Activated CD4-positive, alpha-beta memory T cell treated with anti-CD3 and anti-CD28 coated beads for 36 hours (primary cell): ENCODE measurements at regions of chr1 and their contacts with region 1.

Region 1: GRCh38 chr1:206890690-206891089 is 6.6 kb upstream of the IL24 start:
- DNase-seq: no peak
- H3K4me3 Mint-ChIP-seq: no peak overlapping the region
- H3K27ac Mint-ChIP-seq: peak overlapping the region; percentile 69
- H3K4me1 Mint-ChIP-seq: peaks cover 53% of the 10 kb centered on the region
- H3K27me3 Mint-ChIP-seq: peaks cover 3% of the 10 kb centered on the region

Region 2: DNA sequence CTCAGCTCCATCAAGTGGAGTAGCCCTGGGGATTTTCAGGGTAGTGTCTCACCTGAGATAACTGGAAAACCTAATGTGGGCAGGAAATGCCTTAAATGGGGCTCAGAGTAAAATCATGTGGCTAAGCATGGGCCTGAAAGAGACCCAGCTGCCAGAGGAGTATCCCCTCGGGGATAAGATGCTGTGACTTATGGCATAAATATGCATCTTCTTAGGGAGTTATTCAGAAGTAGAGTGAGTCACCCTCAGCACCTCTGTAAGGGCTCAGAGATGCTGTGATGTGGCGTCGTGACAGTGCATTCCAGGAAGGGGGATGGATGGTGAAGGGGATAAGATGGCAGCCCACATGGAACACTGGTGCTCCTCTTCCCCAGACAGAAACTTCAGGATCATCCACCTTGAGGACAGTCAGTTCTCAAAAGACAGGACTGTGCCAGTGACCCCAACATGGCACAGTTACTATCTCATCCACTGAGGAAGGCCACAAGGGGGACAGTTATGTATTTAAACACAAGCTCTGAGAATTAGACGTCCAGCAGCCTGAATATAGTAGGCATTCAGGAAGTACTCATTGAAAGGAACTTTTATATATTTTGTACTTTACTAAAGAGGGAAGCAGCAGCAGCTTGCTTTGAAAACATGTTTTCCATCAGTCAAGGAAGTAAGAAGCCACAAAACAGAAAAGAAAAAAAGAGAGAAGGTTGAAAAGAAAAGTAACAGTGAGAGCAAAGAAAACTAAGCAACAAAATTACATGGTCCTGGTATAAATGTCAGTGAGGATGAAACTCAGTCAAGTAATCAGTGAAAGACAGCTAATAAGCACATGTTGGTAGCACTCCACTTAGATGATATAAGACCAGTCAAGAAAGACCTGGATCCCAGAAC is 14.8 kb after region 1 on chr1:
- CTCF ChIA-PET with region 1: interaction called, 15 read pairs
- POLR2A ChIA-PET with region 1: interaction called, 3 read pairs
- intact Hi-C with region 1: loop called (anchors 1 kb)
- DNase-seq: peak; percentile 74
- H3K4me3 Mint-ChIP-seq: peak overlapping the region; percentile 33
- H3K27ac Mint-ChIP-seq: peak overlapping the region; percentile 83
- H3K4me1 Mint-ChIP-seq: peaks cover 69% of the 10 kb centered on the region
- H3K27me3 Mint-ChIP-seq: no peaks in the 10 kb centered on the region